ENCODE measurements at regions of chr14 and their contacts with region 1.

Region 1: DNA sequence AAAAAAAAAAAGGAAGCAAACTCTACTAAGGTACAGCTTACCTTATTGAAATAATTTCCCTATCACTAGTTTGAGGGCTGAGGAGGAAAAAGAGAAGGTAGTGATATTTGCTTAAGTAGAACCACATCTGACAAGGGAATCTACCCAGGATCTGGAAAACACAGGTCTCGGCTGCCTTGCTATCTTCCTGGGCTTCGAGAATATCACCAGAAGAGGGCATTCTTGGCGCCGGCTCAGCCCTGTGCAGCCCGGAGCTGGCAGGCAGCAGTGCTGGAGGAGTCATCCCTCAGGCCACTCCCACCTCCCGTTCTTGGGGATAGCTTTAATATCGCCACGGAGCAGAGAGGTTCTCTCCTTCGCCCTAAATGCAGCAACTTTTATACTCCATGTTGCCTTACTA is 1181.2 kb downstream of the VRK1 start:
- DNase-seq: peak; percentile 81
- H3K4me3 Mint-ChIP-seq: peak overlapping the region; percentile 86
- H3K27ac Mint-ChIP-seq: peak overlapping the region; percentile 90
- H3K4me1 Mint-ChIP-seq: peaks cover 50% of the 10 kb centered on the region
- H3K27me3 Mint-ChIP-seq: no peaks in the 10 kb centered on the region

Region 2: DNA sequence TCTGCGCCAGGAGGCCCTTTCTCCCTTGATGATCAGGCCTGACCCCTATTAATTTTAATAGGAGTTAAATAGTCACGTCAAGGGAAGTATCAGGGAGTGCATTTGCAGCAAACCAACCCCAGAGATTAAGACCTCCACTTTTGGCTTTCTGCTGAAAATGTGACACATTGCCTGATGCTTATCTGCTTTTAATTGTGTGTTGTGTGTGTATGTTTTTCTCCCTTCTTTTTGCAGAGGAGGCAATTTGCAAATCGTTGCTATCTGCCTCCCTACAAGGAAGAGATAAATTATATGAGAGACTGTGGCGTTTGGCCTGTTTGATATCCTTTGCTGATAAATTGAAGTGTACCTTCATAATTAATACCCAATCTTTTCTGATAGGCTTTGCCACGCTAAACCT is 358.3 kb before region 1 on chr14:
- CTCF ChIA-PET with region 1: interaction called, 3 read pairs
- POLR2A ChIA-PET with region 1: interaction called, 15 read pairs
- DNase-seq: no peak
- H3K4me3 Mint-ChIP-seq: peak overlapping the region; percentile 73
- H3K27ac Mint-ChIP-seq: peak overlapping the region; percentile 92
- H3K4me1 Mint-ChIP-seq: peaks cover 41% of the 10 kb centered on the region
- H3K27me3 Mint-ChIP-seq: peaks cover 2% of the 10 kb centered on the region

Region 3: DNA sequence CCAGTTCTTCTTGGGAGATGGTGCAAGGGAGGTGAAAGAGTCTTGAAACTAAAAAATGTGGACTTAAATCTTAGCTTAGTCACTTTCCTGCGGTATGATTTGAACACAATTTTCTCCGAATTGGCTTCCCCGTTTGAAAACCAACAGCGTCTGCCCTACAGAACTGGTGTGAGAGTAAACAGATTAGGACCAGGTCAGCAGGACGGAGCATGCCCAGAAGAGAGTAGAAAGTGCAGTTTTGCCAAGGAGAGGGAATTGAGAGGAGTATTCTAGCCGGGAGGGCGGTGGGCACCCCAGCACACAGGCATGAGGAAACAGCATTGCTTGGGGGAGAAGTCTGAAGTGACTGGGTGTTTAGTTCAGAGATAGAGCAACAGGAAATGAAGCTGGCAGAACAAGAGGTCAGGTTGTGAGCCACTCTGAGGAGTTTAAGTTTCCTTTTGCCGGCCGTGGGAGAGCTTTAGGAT is 254.0 kb before region 1 on chr14:
- CTCF ChIA-PET with region 1: no interaction called
- POLR2A ChIA-PET with region 1: interaction called, 16 read pairs
- DNase-seq: peak; percentile 51
- H3K4me3 Mint-ChIP-seq: peak overlapping the region; percentile 61
- H3K27ac Mint-ChIP-seq: peak overlapping the region; percentile 94
- H3K4me1 Mint-ChIP-seq: peaks cover 57% of the 10 kb centered on the region
- H3K27me3 Mint-ChIP-seq: no peaks in the 10 kb centered on the region

Region 4: GRCh38 chr14:98189062-98189461 is 210.7 kb after region 1 on chr14:
- CTCF ChIA-PET with region 1: no interaction called
- POLR2A ChIA-PET with region 1: interaction called, 25 read pairs
- DNase-seq: peak; percentile 67
- H3K4me3 Mint-ChIP-seq: peak overlapping the region; percentile 53
- H3K27ac Mint-ChIP-seq: peak overlapping the region; percentile 95
- H3K4me1 Mint-ChIP-seq: peaks cover 89% of the 10 kb centered on the region
- H3K27me3 Mint-ChIP-seq: no peaks in the 10 kb centered on the region

Region 5: DNA sequence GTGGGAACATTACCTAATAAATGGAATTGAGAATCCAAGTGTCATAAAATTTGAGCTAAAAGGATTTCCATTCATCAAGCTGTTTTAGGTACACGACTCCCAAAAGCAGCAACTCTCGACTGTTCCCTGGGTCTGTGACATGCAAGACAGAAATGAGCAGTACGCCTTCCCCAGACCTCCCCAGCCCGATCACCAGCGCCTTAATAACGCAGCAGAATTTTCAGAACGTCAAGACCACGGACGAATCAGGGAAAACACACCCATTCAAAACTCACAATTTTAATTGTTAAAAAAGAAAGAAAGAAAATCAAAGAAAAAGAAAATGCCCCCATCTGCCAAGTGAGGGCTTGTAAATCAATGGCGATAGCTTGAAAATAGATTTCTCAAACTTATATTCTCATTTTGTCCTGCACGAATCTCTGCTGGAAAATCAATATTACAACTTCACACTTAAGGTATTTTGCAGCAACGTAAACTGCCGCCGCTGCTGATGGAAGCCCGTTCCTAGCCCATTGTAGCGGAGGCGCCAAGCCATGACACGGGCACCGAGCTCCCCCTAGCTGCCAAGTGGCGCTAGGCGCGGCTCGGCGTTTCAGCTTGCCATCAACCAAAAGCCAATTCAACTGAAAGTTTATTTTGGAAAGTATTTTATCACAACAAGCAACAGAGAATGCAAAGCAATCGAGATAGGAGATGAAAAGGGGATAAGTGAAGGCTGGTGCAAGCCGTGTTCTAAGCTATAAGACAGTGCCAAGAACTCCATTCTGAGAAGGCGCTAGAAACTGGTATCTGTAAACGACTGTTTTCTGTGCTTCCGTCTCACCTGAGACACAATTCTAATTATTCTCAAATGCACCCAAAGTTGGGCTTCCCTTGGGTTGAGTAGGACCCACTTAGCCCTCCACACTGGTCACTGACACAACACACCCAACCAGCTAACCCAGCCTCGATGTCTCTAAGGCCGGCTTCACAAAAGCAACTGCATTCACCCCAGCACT is 1288.1 kb after region 1 on chr14:
- CTCF ChIA-PET with region 1: interaction called, 45 read pairs
- POLR2A ChIA-PET with region 1: interaction called, 74 read pairs
- DNase-seq: peak; percentile 92
- H3K4me3 Mint-ChIP-seq: peak overlapping the region; percentile 99
- H3K27ac Mint-ChIP-seq: peak overlapping the region; percentile 100
- H3K4me1 Mint-ChIP-seq: peaks cover 59% of the 10 kb centered on the region
- H3K27me3 Mint-ChIP-seq: no peaks in the 10 kb centered on the region